ENCODE measurements at regions of chr20 and their contacts with region 1.

Region 1: GRCh38 chr20:7980332-7981046 is 39.1 kb downstream of the TMX4 start:
- DNase-seq: peak; percentile 41
- H3K4me3 Mint-ChIP-seq: no peak overlapping the region
- H3K27ac Mint-ChIP-seq: no peak overlapping the region
- H3K4me1 Mint-ChIP-seq: no peaks in the 10 kb centered on the region
- H3K27me3 Mint-ChIP-seq: no peaks in the 10 kb centered on the region
- CTCF ChIP-seq: peak; percentile 44

Region 2: GRCh38 chr20:7967199-7967844 is 13.2 kb before region 1 on chr20:
- CTCF ChIA-PET with region 1: interaction called, 16 read pairs
- POLR2A ChIA-PET with region 1: interaction called, 4 read pairs
- intact Hi-C with region 1: no loop called
- DNase-seq: peak; percentile 34
- H3K4me3 Mint-ChIP-seq: no peak overlapping the region
- H3K27ac Mint-ChIP-seq: peak overlapping the region; percentile 3
- H3K4me1 Mint-ChIP-seq: peaks cover 5% of the 10 kb centered on the region
- H3K27me3 Mint-ChIP-seq: no peaks in the 10 kb centered on the region
- CTCF ChIP-seq: no peak

Region 3: GRCh38 chr20:7994809-7995208 is 14.3 kb after region 1 on chr20:
- CTCF ChIA-PET with region 1: interaction called, 11 read pairs
- POLR2A ChIA-PET with region 1: interaction called, 6 read pairs
- intact Hi-C with region 1: no loop called
- DNase-seq: no peak
- H3K4me3 Mint-ChIP-seq: no peak overlapping the region
- H3K27ac Mint-ChIP-seq: no peak overlapping the region
- H3K4me1 Mint-ChIP-seq: no peaks in the 10 kb centered on the region
- H3K27me3 Mint-ChIP-seq: no peaks in the 10 kb centered on the region
- CTCF ChIP-seq: no peak

Measured in MCF 10A (cell line).